Right cardiac atrium (tissue), 5 donors: ENCODE measurements at regions of chr11 and their contacts with region 1.

Region 1: DNA sequence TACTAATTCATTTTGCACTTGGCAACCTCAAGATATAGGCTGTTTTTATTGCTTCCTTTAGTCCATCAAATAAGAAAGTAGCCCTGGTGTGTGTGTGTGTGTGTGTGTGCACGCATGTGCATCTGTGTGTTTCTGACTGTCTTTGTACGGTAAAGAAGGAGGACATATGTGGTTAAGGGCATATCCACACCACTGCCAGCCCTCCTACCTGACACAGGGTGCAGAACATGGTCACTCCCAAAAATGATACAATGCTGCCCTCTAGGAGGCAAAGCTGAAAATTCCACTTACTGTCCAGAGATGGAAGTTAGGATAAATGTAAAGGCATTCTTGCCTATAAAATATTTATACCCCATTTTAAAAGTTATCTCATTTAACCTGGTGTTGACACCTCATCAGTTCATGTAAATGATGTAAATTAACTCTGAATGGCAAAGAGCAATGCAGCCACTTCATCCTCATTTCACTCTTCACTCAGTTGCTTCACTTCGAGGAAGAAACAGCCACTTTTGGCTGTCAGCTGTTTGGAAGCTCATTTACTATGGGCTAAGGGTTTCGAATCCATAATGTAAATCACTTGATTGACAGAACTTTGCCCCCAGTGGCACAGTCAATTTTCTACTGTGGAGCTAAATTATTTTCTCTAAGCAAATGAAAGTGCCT is 83.1 kb upstream of the MTNR1B start:
- DNase-seq: no peak
- ATAC-seq: peak; percentile 69 to 75
- H3K4me3 ChIP-seq: no peak overlapping the region
- H3K27ac ChIP-seq: no peak overlapping the region
- H3K4me1 ChIP-seq: no peaks in the 10 kb centered on the region
- H3K27me3 ChIP-seq: no peaks in the 10 kb centered on the region

Region 2: GRCh38 chr11:92211576-92212167 is 674.7 kb before region 1 on chr11:
- intact Hi-C with region 1: loop called in 1 of 4 experiments (anchors 10 kb)
- DNase-seq: peak; percentile 15 to 62 (median 55)
- ATAC-seq: peak; percentile 48 to 70
- H3K4me3 ChIP-seq: no peak overlapping the region
- H3K27ac ChIP-seq: no peak overlapping the region
- H3K4me1 ChIP-seq: no peaks in the 10 kb centered on the region
- H3K27me3 ChIP-seq: no peaks in the 10 kb centered on the region